HEK293 (cell line): ENCODE measurements at regions of chr11 and their contacts with region 1.

Region 1: GRCh38 chr11:111601979-111602864 is at the start of gene SIK2:
- H3K4me3 ChIP-seq: peak within 1 kb of the TSS; percentile 66
- H3K27ac ChIP-seq: peak within 1 kb of the TSS; percentile 81
- H3K4me1 ChIP-seq: no peaks in the 10 kb centered on the region
- CTCF ChIP-seq: peak; percentile 98

Region 2: GRCh38 chr11:111422494-111423249 is 179.6 kb before region 1 on chr11:
- CTCF ChIA-PET with region 1: no interaction called
- POLR2A ChIA-PET with region 1: no interaction called
- H3K4me3 ChIP-seq: no peak overlapping the region
- H3K27ac ChIP-seq: no peak overlapping the region
- H3K4me1 ChIP-seq: peaks cover 2% of the 10 kb centered on the region; the same call in 1 of the 2 replicates
- CTCF ChIP-seq: peak; percentile 91

Region 3: DNA sequence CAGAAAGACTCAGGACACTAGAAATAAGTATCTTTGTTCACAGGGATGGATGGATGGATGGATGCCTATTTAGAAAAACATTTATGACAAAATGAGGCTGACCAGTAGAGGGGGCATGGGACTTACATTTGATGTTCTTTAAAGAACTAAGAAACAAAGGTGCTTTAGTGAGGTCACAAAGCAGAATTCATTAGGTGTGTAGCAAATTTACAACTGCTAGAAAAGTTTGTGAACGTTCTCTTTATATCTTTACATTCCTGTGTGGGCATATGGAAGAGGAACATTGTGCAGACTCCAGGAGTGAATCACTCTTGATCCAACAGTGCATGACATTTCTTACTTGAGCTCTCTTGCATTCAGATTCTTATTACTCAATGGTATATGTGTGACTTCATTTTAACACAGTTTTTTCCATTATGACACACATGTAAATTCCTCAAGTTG is 15.8 kb before region 1 on chr11:
- CTCF ChIA-PET with region 1: interaction called, 10 read pairs
- POLR2A ChIA-PET with region 1: no interaction called
- H3K4me3 ChIP-seq: no peak overlapping the region
- H3K27ac ChIP-seq: no peak overlapping the region
- H3K4me1 ChIP-seq: no peaks in the 10 kb centered on the region
- CTCF ChIP-seq: no peak

Region 4: GRCh38 chr11:111612224-111612623 is 10.0 kb after region 1 on chr11:
- CTCF ChIA-PET with region 1: interaction called, 12 read pairs
- POLR2A ChIA-PET with region 1: no interaction called
- H3K4me3 ChIP-seq: no peak overlapping the region
- H3K27ac ChIP-seq: no peak overlapping the region
- H3K4me1 ChIP-seq: no peaks in the 10 kb centered on the region
- CTCF ChIP-seq: no peak

Region 5: GRCh38 chr11:111766093-111766833 is 164.0 kb after region 1 on chr11 and contains the start of gene PPP2R1B:
- CTCF ChIA-PET with region 1: interaction called, 13 read pairs
- POLR2A ChIA-PET with region 1: interaction called, 6 read pairs
- H3K4me3 ChIP-seq: peak within 1 kb of the TSS; percentile 99
- H3K27ac ChIP-seq: peak within 1 kb of the TSS; percentile 33; the same call in 1 of the 2 replicates
- H3K4me1 ChIP-seq: no peaks in the 10 kb centered on the region
- CTCF ChIP-seq: no peak